B cell (primary cell): ENCODE measurements at regions of chr4 and their contacts with region 1.

Region 1: DNA sequence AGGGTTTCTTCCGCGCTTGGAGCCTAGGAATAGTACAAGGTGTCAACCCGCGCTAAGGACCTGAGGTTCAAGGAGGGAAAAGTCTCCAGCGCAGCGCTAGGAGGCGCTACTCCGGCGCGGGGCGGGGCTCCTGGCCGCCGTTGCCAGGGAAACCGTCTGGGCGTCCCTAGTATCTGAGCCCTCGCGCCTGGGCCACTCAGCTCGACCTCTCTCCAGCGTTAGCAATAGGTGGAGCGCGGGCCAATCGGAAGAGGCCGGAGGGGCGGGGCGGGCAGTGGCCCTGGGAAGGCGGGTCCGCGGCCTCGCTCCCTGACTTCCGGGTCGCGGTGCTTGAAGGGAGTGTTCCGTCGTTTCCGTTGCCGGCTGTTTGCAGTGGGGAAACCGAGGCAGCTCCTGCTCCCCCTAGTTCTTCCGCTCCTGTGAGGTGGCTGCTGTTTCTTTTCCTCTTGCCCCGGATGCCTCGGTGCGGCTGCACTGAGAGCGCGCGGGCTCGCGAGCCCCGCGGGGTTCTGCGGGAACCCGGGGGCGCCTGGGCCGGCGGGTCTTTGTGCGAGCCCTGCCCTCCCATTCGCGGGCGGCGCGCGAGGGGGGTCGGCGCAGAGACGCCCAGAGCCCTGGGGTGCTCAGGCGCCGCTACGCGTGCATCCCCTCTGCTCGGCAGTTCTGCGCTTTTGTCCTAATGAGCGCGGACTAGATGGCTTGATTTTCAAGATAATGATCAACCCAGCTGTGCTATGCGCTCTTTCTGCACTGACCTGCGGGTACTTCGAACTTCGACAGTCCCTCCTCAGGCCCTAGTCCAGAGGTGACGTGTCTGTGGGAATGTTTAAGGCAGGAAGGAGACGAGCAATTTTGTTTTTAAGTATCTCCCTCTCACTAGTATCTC is at the start of gene ELMOD2:
- DNase-seq: peak; percentile 98
- ATAC-seq: peak; percentile 99
- H3K4me3 ChIP-seq: peak within 1 kb of the TSS; percentile 65 to 89 (median 78)
- H3K4me3 Mint-ChIP-seq: peak within 1 kb of the TSS; percentile 91
- H3K27ac ChIP-seq: peak within 1 kb of the TSS; percentile 59 to 71
- H3K27ac Mint-ChIP-seq: peak within 1 kb of the TSS; percentile 86
- H3K4me1 ChIP-seq: peaks cover 12 to 13% of the 10 kb centered on the region in 2 donors
- H3K4me1 Mint-ChIP-seq: peaks cover 16% of the 10 kb centered on the region
- H3K27me3 ChIP-seq: no peaks in the 10 kb centered on the region
- H3K27me3 Mint-ChIP-seq: no peaks in the 10 kb centered on the region
- CTCF ChIP-seq: peak; percentile 92
- total RNA-seq, gene ELMOD2: 23.4 and 25.3 TPM in 2 replicates

Region 2: DNA sequence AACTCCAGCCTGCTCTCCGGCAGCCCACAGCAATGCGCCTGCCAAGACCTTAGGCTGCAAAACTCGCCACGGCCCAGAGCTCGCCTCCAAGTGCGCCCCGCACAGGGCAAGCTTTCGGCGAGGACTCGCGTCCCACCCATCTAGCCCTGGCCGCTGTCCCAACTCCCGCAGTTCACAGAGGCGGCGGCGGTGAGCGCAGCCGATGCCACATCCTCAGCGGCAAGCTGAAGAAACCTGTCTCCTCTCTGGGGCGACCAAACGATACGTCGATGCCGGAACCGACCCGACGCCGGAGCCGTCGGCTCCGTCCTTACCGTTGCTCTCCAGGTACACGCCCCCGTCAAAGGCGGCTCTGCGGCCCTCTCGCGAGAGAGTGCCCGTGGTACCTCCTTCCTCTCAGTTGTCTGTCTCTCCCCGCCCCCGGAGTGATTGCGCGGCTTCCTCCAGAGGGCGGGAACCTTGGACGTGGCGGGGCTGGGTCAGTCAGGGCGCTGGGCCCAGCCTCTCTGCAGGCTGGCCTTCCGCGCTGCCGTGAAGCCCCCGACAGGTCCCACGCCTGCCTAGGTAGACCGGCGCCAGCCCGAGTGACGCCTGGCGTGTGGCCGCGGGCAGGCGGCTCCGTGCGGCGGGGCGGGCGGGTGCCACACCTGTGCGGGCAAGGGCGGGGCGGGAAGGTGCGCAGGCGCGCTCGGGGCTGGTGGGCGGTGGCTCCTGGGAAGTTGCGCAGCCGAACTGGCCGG is 1070.6 kb before region 1 on chr4:
- CTCF ChIA-PET with region 1: no interaction called
- POLR2A ChIA-PET with region 1: no interaction called
- intact Hi-C with region 1: loop called (anchors 5 kb)
- DNase-seq: peak; percentile 98
- ATAC-seq: peak; percentile 87
- H3K4me3 ChIP-seq: peak overlapping the region; percentile 64 to 99 (median 93)
- H3K4me3 Mint-ChIP-seq: peak overlapping the region; percentile 96
- H3K27ac ChIP-seq: peak overlapping the region; percentile 97 to 98
- H3K27ac Mint-ChIP-seq: peak overlapping the region; percentile 99
- H3K4me1 ChIP-seq: peaks cover 28 to 34% of the 10 kb centered on the region in 2 donors
- H3K4me1 Mint-ChIP-seq: peaks cover 51% of the 10 kb centered on the region
- H3K27me3 ChIP-seq: no peaks in the 10 kb centered on the region
- H3K27me3 Mint-ChIP-seq: no peaks in the 10 kb centered on the region
- CTCF ChIP-seq: peak; percentile 42

Region 3: GRCh38 chr4:140373328-140374129 is 150.6 kb before region 1 on chr4 and contains the start of gene SCOC:
- CTCF ChIA-PET with region 1: interaction called, 12 read pairs
- POLR2A ChIA-PET with region 1: no interaction called
- intact Hi-C with region 1: loop called (anchors 1 kb)
- DNase-seq: peak; percentile 97
- ATAC-seq: peak; percentile 95
- H3K4me3 ChIP-seq: peak within 1 kb of the TSS; percentile 54 to 98 (median 93)
- H3K4me3 Mint-ChIP-seq: peak within 1 kb of the TSS; percentile 86
- H3K27ac ChIP-seq: peak within 1 kb of the TSS; percentile 74 to 86
- H3K27ac Mint-ChIP-seq: peak within 1 kb of the TSS; percentile 64
- H3K4me1 ChIP-seq: peaks cover 14 to 16% of the 10 kb centered on the region in 2 donors
- H3K4me1 Mint-ChIP-seq: peaks cover 25% of the 10 kb centered on the region
- H3K27me3 ChIP-seq: no peaks in the 10 kb centered on the region
- H3K27me3 Mint-ChIP-seq: no peaks in the 10 kb centered on the region
- CTCF ChIP-seq: no peak
- total RNA-seq, gene SCOC: 18.4 and 19.2 TPM in 2 replicates

Region 4: GRCh38 chr4:140609548-140610425 is 85.7 kb after region 1 on chr4:
- CTCF ChIA-PET with region 1: interaction called, 16 read pairs
- POLR2A ChIA-PET with region 1: no interaction called
- intact Hi-C with region 1: loop called (anchors 2 kb)
- DNase-seq: peak; percentile 57
- ATAC-seq: peak; percentile 68
- H3K4me3 ChIP-seq: no peak overlapping the region
- H3K4me3 Mint-ChIP-seq: no peak overlapping the region
- H3K27ac ChIP-seq: no peak overlapping the region
- H3K27ac Mint-ChIP-seq: no peak overlapping the region
- H3K4me1 ChIP-seq: peaks cover 0 to 6% of the 10 kb centered on the region in 2 donors
- H3K4me1 Mint-ChIP-seq: peaks cover 7% of the 10 kb centered on the region
- H3K27me3 ChIP-seq: no peaks in the 10 kb centered on the region
- H3K27me3 Mint-ChIP-seq: peaks cover 15% of the 10 kb centered on the region
- CTCF ChIP-seq: peak; percentile 76

Region 5: GRCh38 chr4:140807491-140808252 is 283.6 kb after region 1 on chr4:
- CTCF ChIA-PET with region 1: no interaction called
- POLR2A ChIA-PET with region 1: no interaction called
- intact Hi-C with region 1: loop called (anchors 5 kb)
- DNase-seq: peak; percentile 80
- ATAC-seq: peak; percentile 84
- H3K4me3 ChIP-seq: peak overlapping the region in 2 of 5 experiments; percentile 10 to 50
- H3K4me3 Mint-ChIP-seq: peak overlapping the region; percentile 70
- H3K27ac ChIP-seq: peak overlapping the region; percentile 82 to 83
- H3K27ac Mint-ChIP-seq: peak overlapping the region; percentile 97
- H3K4me1 ChIP-seq: peaks cover 85 to 92% of the 10 kb centered on the region in 2 donors
- H3K4me1 Mint-ChIP-seq: peaks cover 83% of the 10 kb centered on the region
- H3K27me3 ChIP-seq: no peaks in the 10 kb centered on the region
- H3K27me3 Mint-ChIP-seq: no peaks in the 10 kb centered on the region
- CTCF ChIP-seq: no peak

Region 6: GRCh38 chr4:141090473-141090872 is 566.4 kb after region 1 on chr4:
- CTCF ChIA-PET with region 1: no interaction called
- POLR2A ChIA-PET with region 1: no interaction called
- intact Hi-C with region 1: no loop called
- DNase-seq: no peak
- ATAC-seq: no peak
- H3K4me3 ChIP-seq: no peak overlapping the region
- H3K4me3 Mint-ChIP-seq: no peak overlapping the region
- H3K27ac ChIP-seq: no peak overlapping the region
- H3K27ac Mint-ChIP-seq: no peak overlapping the region
- H3K4me1 ChIP-seq: no peaks in the 10 kb centered on the region
- H3K4me1 Mint-ChIP-seq: no peaks in the 10 kb centered on the region
- H3K27me3 ChIP-seq: no peaks in the 10 kb centered on the region
- H3K27me3 Mint-ChIP-seq: peaks cover 8% of the 10 kb centered on the region
- CTCF ChIP-seq: no peak